ENCODE measurements at regions of chr3 and their contacts with region 1.

Region 1: GRCh38 chr3:14467814-14468620 is 65.6 kb downstream of the SLC6A6 start:
- DNase-seq: peak in 1 of 5 donors; percentile 30
- ATAC-seq: peak in 2 of 4 donors; percentile 48 to 53
- H3K4me3 ChIP-seq: no peak overlapping the region
- H3K27ac ChIP-seq: no peak overlapping the region
- H3K4me1 ChIP-seq: peaks cover 0 to 25% (median 0%) of the 10 kb centered on the region in 12 donors
- H3K27me3 ChIP-seq: peaks cover 0 to 5% (median 0%) of the 10 kb centered on the region in 9 donors
- CTCF ChIP-seq: peak; percentile 77 to 94 (median 89)
- POLR2A ChIP-seq: no peak

Region 2: GRCh38 chr3:14274999-14275961 is 192.7 kb before region 1 on chr3:
- intact Hi-C with region 1: loop called in 1 of 10 experiments (anchors 5 kb)
- DNase-seq: no peak
- ATAC-seq: no peak
- H3K4me3 ChIP-seq: no peak overlapping the region
- H3K27ac ChIP-seq: no peak overlapping the region
- H3K4me1 ChIP-seq: no peaks in the 10 kb centered on the region
- H3K27me3 ChIP-seq: peaks cover 0 to 48% (median 8%) of the 10 kb centered on the region in 9 donors
- CTCF ChIP-seq: peak in 8 of 12 donors; percentile 13 to 38 (median 28)
- POLR2A ChIP-seq: no peak

Measured in heart left ventricle (tissue), 16 donors.